ENCODE measurements at regions of chr9 and their contacts with region 1.

Region 1: GRCh38 chr9:70962664-70963435 is 158.6 kb downstream of the TRPM3 start:
- DNase-seq: no peak
- ATAC-seq: no peak

Region 2: GRCh38 chr9:70761139-70761670 is 201.6 kb before region 1 on chr9:
- intact Hi-C with region 1: no loop called
- DNase-seq: no peak
- ATAC-seq: no peak

Region 3: GRCh38 chr9:71025201-71025600 is 62.4 kb after region 1 on chr9:
- intact Hi-C with region 1: loop called in 1 of 2 experiments (anchors 2 kb)
- DNase-seq: no peak
- ATAC-seq: no peak

Measured in left cardiac atrium (tissue), 4 donors.